CD8-positive, alpha-beta T cell (primary cell): ENCODE measurements at regions of chr15 and their contacts with region 1.

Region 1: DNA sequence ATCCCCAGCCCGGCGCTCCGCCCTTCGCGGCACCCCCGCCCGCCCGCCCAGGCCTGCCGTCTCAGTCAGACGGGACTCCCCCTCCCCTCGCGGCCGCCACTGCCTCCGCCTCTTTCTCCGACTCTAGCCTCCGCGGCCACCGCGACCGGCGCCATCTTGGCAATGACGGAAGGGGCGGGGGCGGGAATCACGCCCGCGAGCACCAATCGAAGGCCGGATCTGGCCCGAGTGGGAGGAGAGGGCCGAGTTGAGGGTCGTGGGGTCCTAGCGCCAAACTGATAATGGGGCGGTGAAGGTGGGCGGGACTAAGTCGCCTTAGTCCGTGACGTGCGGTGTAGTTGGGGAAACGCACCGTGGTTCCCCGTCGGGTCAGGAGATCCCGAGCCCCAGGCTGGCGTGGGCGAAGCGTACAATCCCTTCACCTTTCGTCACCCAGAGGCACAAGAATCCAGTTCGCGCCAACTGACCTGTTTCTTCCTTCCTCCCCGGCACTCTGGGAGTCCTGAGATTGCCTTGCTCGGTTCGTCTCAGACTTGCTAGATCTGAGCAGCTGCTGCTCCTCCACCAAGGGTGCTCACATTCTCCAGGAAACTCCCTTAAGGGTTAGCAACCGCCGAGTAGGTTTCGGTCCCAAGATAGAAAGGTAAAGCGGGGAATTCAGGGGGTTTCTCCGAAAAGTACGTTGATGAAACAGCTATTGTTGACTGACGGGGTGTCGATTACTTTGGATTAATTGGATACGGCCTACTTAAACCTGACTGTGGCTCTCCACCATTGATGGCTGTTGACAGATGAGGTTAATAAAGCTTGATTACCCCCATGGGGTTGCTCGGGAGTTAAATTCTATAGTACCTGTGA is at the start of gene DENND4A:
- DNase-seq: peak; percentile 97 to 100 (median 98)
- ATAC-seq: peak; percentile 83
- H3K4me3 ChIP-seq: peak within 1 kb of the TSS; percentile 79 to 85
- H3K4me3 Mint-ChIP-seq: peak within 1 kb of the TSS; percentile 88
- H3K27ac ChIP-seq: peak within 1 kb of the TSS; percentile 96 to 97
- H3K27ac Mint-ChIP-seq: peak within 1 kb of the TSS; percentile 98
- H3K4me1 ChIP-seq: peaks cover 31% of the 10 kb centered on the region
- H3K4me1 Mint-ChIP-seq: peaks cover 42% of the 10 kb centered on the region
- H3K27me3 ChIP-seq: no peaks in the 10 kb centered on the region
- H3K27me3 Mint-ChIP-seq: no peaks in the 10 kb centered on the region
- CTCF ChIP-seq: no peak
- total RNA-seq, gene DENND4A: 105 TPM

Region 2: DNA sequence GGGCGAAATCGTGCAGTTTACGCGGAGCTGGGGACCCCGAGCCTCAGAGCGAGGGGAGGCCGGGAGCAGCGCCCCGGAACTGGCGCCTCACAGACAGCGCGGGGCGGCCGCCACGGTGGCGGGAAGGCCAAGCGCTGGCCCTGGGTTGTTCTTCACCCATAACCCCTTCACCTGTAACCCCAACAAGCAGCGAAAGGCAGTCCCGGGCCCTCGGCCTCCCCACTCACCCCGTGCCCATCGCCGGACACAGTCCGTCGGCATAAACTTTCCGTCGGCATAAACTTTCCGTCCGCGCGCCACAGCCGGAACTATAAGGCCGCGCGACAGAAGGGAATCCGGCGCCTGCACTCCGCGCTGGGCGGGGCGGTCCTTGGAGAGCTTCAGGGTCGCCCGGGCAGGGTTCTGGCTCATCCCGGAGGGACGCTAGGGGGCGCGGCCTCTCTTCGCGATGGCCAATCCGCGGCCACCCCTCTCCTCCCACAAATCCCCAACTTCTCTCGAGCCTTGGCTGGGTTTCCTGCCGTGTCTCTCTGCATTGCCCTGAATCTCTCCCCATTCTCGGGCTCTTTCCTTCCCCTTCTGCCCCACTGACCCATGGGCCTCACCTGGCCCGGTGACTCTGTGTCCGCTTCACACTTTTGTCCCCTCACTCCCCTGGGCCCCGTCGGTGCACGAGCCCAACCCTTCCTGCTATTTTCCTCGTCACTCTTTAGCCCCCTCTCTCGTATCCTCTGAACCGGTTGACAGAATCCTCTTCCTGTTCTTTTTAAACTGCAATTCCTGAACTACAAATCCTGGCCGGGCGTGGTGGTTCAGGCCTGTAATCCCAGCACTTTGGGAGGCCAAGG is 181.3 kb before region 1 on chr15 and contains the start of gene INTS14:
- CTCF ChIA-PET with region 1: no interaction called
- POLR2A ChIA-PET with region 1: interaction called, 3 read pairs
- intact Hi-C with region 1: loop called (anchors 5 kb)
- DNase-seq: peak; percentile 81 to 95 (median 92)
- ATAC-seq: peak; percentile 95
- H3K4me3 ChIP-seq: peak within 1 kb of the TSS; percentile 85 to 96
- H3K4me3 Mint-ChIP-seq: peak within 1 kb of the TSS; percentile 97
- H3K27ac ChIP-seq: peak within 1 kb of the TSS; percentile 80 to 95
- H3K27ac Mint-ChIP-seq: peak within 1 kb of the TSS; percentile 98
- H3K4me1 ChIP-seq: peaks cover 17% of the 10 kb centered on the region
- H3K4me1 Mint-ChIP-seq: peaks cover 43% of the 10 kb centered on the region
- H3K27me3 ChIP-seq: no peaks in the 10 kb centered on the region
- H3K27me3 Mint-ChIP-seq: no peaks in the 10 kb centered on the region
- CTCF ChIP-seq: peak; percentile 26
- total RNA-seq, gene INTS14: 26.7 to 28.6 TPM

Region 3: GRCh38 chr15:65757256-65757655 is 35.1 kb before region 1 on chr15:
- CTCF ChIA-PET with region 1: no interaction called
- POLR2A ChIA-PET with region 1: interaction called, 3 read pairs
- intact Hi-C with region 1: loop called in 1 of 2 experiments (anchors 5 kb)
- DNase-seq: no peak
- ATAC-seq: no peak
- H3K4me3 ChIP-seq: no peak overlapping the region
- H3K4me3 Mint-ChIP-seq: no peak overlapping the region
- H3K27ac ChIP-seq: no peak overlapping the region
- H3K27ac Mint-ChIP-seq: no peak overlapping the region
- H3K4me1 ChIP-seq: peaks cover 5% of the 10 kb centered on the region
- H3K4me1 Mint-ChIP-seq: peaks cover 33% of the 10 kb centered on the region
- H3K27me3 ChIP-seq: no peaks in the 10 kb centered on the region
- H3K27me3 Mint-ChIP-seq: no peaks in the 10 kb centered on the region
- CTCF ChIP-seq: no peak

Region 4: DNA sequence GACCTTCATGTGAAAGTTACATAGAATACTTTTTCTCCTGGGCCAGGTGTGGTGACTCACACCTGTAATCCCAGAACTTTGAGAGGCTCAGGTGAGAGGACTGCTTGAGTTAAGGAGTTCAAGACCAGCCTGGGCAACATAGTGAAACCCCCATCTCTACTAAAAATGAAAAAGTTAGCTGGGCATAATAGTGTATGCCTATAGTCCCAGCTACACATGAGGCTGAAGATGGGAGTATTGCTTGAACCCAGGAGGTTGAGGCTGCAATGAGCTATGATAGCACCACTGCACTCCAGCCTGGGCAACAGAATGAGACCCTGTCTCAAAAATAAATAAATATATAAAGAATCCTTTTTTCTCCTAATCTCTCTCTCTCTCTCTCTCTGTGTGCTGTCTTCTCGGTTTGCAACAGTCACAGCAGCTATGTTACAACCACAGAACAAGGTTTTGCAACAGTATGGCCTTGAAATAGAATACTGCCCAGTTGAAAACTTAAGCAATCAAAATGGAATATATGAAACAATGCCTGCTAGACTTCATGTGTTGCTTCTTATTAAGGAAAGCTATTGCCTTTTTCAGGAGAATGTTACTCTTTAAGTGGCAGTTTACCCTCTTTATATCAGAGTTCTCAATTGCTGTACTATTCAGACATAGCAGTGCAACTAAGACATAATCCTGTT is 12.0 kb after region 1 on chr15:
- CTCF ChIA-PET with region 1: interaction called, 5 read pairs
- POLR2A ChIA-PET with region 1: interaction called, 53 read pairs
- intact Hi-C with region 1: loop called in 1 of 2 experiments (anchors 1 kb)
- DNase-seq: no peak
- ATAC-seq: no peak
- H3K4me3 ChIP-seq: no peak overlapping the region
- H3K4me3 Mint-ChIP-seq: no peak overlapping the region
- H3K27ac ChIP-seq: peak overlapping the region in 1 of 2 experiments; percentile 47
- H3K27ac Mint-ChIP-seq: peak overlapping the region; percentile 88
- H3K4me1 ChIP-seq: peaks cover 36% of the 10 kb centered on the region
- H3K4me1 Mint-ChIP-seq: peaks cover 34% of the 10 kb centered on the region
- H3K27me3 ChIP-seq: no peaks in the 10 kb centered on the region
- H3K27me3 Mint-ChIP-seq: no peaks in the 10 kb centered on the region
- CTCF ChIP-seq: no peak

Region 5: DNA sequence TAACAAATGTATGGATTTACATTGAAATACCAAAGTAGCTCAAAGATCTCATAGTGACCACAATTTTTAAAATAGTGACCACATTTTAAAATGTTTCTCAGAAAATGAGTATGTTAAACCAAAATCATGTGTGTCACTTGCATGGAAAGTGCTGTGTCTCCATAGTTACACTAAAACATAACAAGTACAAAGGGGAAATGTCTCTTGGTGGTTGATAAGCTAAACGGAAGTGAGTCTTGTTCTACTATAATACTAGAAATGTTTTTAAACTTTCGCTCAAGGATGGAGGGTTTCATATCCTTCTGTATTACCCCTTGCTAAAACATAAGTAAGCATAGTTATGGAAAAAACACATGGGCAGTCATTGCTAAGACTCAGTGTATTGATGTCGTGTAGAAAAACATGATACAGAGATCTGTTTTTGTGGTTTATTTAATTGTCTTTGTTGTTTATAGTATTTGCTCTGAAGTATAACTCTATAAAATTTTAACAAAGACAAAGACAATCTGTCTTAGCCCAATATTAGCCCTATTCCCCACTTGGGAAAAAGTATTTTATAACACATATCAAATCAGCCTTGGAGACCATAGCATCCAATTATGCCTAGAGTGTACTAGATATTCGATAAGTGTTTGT is 26.7 kb after region 1 on chr15:
- CTCF ChIA-PET with region 1: interaction called, 6 read pairs
- POLR2A ChIA-PET with region 1: interaction called, 32 read pairs
- intact Hi-C with region 1: loop called (anchors 1 kb)
- DNase-seq: peak in 2 of 9 experiments; percentile 86 to 94
- ATAC-seq: peak; percentile 90
- H3K4me3 ChIP-seq: peak overlapping the region in 1 of 2 experiments; percentile 2
- H3K4me3 Mint-ChIP-seq: peak overlapping the region; percentile 59
- H3K27ac ChIP-seq: peak overlapping the region; percentile 84 to 88
- H3K27ac Mint-ChIP-seq: peak overlapping the region; percentile 92
- H3K4me1 ChIP-seq: peaks cover 39% of the 10 kb centered on the region
- H3K4me1 Mint-ChIP-seq: peaks cover 49% of the 10 kb centered on the region
- H3K27me3 ChIP-seq: no peaks in the 10 kb centered on the region
- H3K27me3 Mint-ChIP-seq: no peaks in the 10 kb centered on the region
- CTCF ChIP-seq: no peak

Region 6: DNA sequence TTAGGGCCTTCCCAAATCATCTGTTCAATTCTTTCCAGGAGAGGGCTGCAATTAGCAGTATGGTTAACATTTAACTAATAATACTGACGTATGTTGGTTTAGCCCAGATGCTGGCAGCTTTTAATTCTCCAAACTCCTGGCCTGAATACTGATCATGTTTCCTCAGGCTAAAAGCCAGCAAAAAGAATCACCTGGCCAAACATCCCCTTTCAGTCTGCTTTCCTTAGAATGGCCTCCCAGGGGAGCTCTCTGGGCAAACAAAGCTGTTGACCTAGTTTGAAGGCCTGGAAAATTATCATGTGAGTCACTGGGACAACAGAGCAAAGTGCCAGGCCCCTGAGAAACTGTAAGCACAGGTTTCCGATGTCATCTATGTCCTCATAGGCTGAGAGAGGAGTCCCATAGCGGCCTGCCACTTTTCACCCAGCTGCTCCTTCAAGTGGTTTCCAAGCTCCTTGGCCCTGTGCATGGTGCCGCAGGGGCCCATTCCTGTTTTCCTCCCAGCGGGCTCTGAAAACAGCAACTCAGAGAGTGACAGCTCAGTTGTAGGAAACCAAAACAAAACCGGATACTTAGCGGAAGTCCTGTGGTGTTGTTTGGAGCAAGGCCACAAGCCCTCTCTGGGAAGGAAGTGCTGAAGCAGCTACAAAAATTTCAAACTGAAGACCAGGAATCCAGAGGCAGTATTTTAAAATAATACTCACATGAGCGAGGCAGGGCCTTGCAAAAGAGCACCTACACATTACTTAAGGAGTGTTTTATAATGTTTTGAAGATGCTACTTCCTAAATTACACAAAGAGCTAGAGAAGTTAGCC is 40.4 kb after region 1 on chr15:
- CTCF ChIA-PET with region 1: interaction called, 27 read pairs
- POLR2A ChIA-PET with region 1: interaction called, 29 read pairs
- intact Hi-C with region 1: loop called (anchors 1 kb)
- DNase-seq: peak; percentile 12 to 81 (median 55)
- ATAC-seq: peak; percentile 40
- H3K4me3 ChIP-seq: peak overlapping the region; percentile 2 to 18
- H3K4me3 Mint-ChIP-seq: peak overlapping the region; percentile 75
- H3K27ac ChIP-seq: peak overlapping the region; percentile 39 to 89
- H3K27ac Mint-ChIP-seq: peak overlapping the region; percentile 94
- H3K4me1 ChIP-seq: peaks cover 52% of the 10 kb centered on the region
- H3K4me1 Mint-ChIP-seq: peaks cover 57% of the 10 kb centered on the region
- H3K27me3 ChIP-seq: no peaks in the 10 kb centered on the region
- H3K27me3 Mint-ChIP-seq: no peaks in the 10 kb centered on the region
- CTCF ChIP-seq: no peak

Region 7: GRCh38 chr15:65856821-65857455 is 64.6 kb after region 1 on chr15:
- CTCF ChIA-PET with region 1: interaction called, 11 read pairs
- POLR2A ChIA-PET with region 1: interaction called, 4 read pairs
- intact Hi-C with region 1: loop called (anchors 2 kb)
- DNase-seq: peak; percentile 59 to 88 (median 84)
- ATAC-seq: peak; percentile 87
- H3K4me3 ChIP-seq: no peak overlapping the region
- H3K4me3 Mint-ChIP-seq: no peak overlapping the region
- H3K27ac ChIP-seq: no peak overlapping the region
- H3K27ac Mint-ChIP-seq: no peak overlapping the region
- H3K4me1 ChIP-seq: no peaks in the 10 kb centered on the region
- H3K4me1 Mint-ChIP-seq: peaks cover 11% of the 10 kb centered on the region
- H3K27me3 ChIP-seq: no peaks in the 10 kb centered on the region
- H3K27me3 Mint-ChIP-seq: no peaks in the 10 kb centered on the region
- CTCF ChIP-seq: peak; percentile 80

Region 8: GRCh38 chr15:65906396-65906795 is 114.0 kb after region 1 on chr15:
- CTCF ChIA-PET with region 1: no interaction called
- POLR2A ChIA-PET with region 1: no interaction called
- intact Hi-C with region 1: no loop called
- DNase-seq: no peak
- ATAC-seq: no peak
- H3K4me3 ChIP-seq: no peak overlapping the region
- H3K4me3 Mint-ChIP-seq: no peak overlapping the region
- H3K27ac ChIP-seq: no peak overlapping the region
- H3K27ac Mint-ChIP-seq: no peak overlapping the region
- H3K4me1 ChIP-seq: no peaks in the 10 kb centered on the region
- H3K4me1 Mint-ChIP-seq: no peaks in the 10 kb centered on the region
- H3K27me3 ChIP-seq: no peaks in the 10 kb centered on the region
- H3K27me3 Mint-ChIP-seq: no peaks in the 10 kb centered on the region
- CTCF ChIP-seq: no peak

Region 9: DNA sequence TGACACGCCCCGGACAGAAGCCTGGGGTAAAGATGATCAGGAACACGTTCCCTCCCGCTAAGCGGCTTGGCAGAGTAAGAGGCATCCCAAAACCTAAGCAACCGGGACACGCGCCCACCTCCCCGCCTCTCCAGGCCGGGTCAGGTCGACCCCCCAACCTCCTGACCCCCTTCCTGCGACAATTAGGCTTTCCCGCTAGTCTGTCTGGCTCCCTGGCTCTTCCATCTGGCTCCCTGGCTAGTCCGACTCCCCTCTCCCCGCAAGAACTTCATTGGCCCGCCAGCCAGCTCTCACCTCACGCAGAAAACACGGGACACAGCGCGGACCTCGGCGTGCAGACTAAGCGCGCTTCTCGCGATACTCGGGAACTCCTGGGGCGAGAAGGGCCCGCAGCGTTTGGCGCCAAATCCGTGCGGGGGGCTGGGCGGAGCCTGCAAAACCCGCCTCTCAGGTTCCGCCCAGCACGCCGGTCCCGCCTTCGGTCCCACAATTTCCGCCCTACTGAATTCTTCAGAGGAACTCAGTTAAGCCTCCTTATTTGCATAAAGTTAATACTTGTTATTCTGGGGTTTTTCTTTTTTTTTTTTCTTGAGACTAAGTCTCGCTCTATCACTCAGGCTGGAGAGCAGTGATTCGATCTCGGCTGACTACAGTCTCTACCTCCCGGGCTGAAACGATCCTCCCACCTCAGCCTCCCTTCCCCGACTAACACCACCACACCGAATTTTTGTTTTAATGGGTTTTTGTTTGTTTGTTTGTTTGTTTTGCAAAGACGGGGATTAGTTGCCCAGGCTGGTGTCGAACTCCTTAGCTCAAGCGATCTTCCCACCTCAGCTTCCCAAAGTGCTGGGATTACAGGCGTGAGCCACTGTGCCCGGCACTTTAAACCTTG is 564.2 kb after region 1 on chr15 and contains the start of gene TIPIN:
- CTCF ChIA-PET with region 1: no interaction called
- POLR2A ChIA-PET with region 1: no interaction called
- intact Hi-C with region 1: no loop called
- DNase-seq: peak; percentile 92 to 98 (median 97)
- ATAC-seq: peak; percentile 97
- H3K4me3 ChIP-seq: peak within 1 kb of the TSS; percentile 69 to 76
- H3K4me3 Mint-ChIP-seq: peak within 1 kb of the TSS; percentile 99
- H3K27ac ChIP-seq: peak within 1 kb of the TSS; percentile 50 to 69
- H3K27ac Mint-ChIP-seq: peak within 1 kb of the TSS; percentile 96
- H3K4me1 ChIP-seq: peaks cover 14% of the 10 kb centered on the region
- H3K4me1 Mint-ChIP-seq: peaks cover 19% of the 10 kb centered on the region
- H3K27me3 ChIP-seq: no peaks in the 10 kb centered on the region
- H3K27me3 Mint-ChIP-seq: no peaks in the 10 kb centered on the region
- CTCF ChIP-seq: no peak
- total RNA-seq, gene TIPIN: 4.8 to 4.9 TPM